ENCODE measurements at regions of chr20 and their contacts with region 1.

Region 1: GRCh38 chr20:13464702-13465101 is 174.0 kb downstream of the TASP1 start:
- DNase-seq: no peak
- H3K4me3 ChIP-seq: no peak overlapping the region
- H3K27ac ChIP-seq: no peak overlapping the region
- H3K4me1 ChIP-seq: no peaks in the 10 kb centered on the region
- H3K27me3 ChIP-seq: no peaks in the 10 kb centered on the region
- CTCF ChIP-seq: no peak

Region 2: DNA sequence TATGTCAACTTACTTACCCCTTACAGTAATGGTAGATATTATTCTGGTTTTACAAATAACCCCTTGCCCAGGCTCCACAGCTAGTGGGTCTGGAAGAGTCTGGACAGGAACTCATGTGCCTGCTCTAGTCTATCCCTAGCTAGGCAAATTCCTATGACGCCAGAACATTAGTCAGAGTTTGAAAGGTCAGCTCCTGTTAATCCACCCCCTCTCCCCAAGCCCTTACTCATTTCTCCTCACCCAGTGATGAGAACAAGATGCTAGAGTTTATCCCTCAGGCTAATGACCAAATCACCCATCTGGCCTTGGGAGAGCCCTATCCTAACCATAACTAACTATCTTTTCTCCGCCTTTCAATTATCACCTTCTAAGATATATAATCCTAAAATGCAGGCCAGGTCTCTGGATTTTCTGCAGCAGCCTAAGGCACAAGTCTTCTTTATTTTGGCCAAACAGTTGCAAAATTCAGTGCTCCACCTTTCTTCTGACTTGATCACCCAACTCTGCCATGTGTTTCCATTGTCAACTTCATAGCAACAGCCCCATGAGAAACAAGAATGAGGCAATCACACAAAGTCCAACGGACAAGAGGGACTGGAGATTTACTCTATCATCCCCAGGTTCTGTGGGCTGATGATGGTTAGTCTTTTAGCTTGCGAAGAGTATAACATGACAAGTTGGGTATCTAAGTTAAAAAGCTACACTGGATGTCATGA is 60.7 kb after region 1 on chr20:
- intact Hi-C with region 1: loop called (anchors 10 kb)
- DNase-seq: no peak
- H3K4me3 ChIP-seq: no peak overlapping the region
- H3K27ac ChIP-seq: no peak overlapping the region
- H3K4me1 ChIP-seq: no peaks in the 10 kb centered on the region
- H3K27me3 ChIP-seq: no peaks in the 10 kb centered on the region
- CTCF ChIP-seq: no peak